T-cell (primary cell): ENCODE measurements at regions of chr10 and their contacts with region 1.

Region 1: DNA sequence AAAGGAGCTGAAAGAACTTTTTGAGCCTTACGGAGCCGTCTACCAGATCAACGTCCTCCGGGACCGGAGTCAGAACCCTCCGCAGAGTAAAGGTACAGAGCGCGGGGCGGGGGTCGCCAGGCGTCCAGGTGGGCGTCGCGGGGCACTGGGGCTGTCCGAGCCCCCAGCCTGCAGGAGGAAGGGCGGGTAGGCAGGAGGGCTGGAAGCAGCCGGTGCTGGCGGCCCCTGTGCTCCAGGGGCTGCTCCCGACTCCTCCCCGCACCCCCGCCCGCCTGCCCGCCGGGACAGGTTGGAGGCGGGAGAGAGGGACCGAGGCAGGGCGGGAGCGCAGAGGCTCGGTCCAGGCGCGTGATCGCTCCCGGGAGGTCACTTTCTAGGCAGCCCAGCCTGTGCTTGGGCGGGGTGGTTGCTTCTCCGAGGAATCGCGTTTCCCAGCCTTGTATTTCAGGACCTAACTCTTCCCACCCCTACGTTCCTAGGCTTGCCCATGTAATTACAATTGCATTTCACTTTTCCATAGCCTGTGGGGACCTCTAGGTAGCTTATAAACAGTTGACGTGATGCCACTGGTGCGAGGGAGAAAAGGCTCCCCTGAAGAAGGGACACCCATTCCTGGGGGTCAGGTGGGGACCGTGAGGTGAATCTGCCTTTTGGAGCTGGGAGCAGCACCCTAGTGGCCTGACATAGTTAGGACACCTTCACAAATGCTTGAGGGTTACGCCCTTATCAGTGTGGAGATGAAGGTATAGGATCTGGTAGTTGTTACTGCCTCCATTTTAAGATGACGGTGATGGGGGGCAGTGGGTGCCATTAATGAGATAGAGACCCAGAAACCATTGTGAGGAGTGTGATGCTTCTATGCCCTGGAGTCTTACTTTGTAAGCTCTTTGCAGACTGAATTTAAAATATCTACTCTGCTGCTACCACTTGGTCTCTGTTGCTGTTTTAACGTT is 148.2 kb downstream of the CELF2 start:
- DNase-seq: peak; percentile 47 to 88 (median 73)
- ATAC-seq: peak; percentile 49 to 64 (median 57)
- H3K4me3 ChIP-seq: peak overlapping the region; percentile 86 to 96
- H3K4me3 Mint-ChIP-seq: no peak overlapping the region
- H3K27ac ChIP-seq: peak overlapping the region; percentile 94
- H3K27ac Mint-ChIP-seq: peak overlapping the region; percentile 97 to 98
- H3K4me1 ChIP-seq: peaks cover 45 to 48% of the 10 kb centered on the region in 2 experiments
- H3K4me1 Mint-ChIP-seq: peaks cover 38 to 44% (median 43%) of the 10 kb centered on the region in 3 donors
- H3K27me3 ChIP-seq: no peaks in the 10 kb centered on the region
- H3K27me3 Mint-ChIP-seq: no peaks in the 10 kb centered on the region

Region 2: DNA sequence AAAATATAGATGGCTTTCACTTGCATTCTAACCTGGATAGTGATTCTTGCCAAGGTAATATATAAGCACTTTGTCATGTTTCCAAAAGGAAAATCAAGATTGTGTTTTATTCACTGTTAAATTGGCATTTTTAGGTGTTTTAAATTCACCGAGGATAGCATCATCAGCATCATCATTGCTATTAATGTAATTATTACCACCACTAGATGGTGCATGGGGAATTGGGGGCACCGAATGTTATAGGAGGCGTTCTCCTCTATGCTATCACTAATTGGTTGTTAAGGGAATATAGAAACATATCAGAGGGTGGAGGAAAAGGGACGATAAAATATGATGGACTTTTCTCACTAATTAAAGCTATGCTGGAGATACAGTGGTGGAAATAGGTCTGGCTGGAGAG is 52.7 kb before region 1 on chr10:
- CTCF ChIA-PET with region 1: interaction called, 21 to 40 read pairs
- POLR2A ChIA-PET with region 1: no interaction called
- DNase-seq: peak in 26 of 35 experiments; percentile 7 to 77 (median 27)
- ATAC-seq: peak; percentile 56 to 96 (median 82)
- H3K4me3 ChIP-seq: no peak overlapping the region
- H3K4me3 Mint-ChIP-seq: peak overlapping the region in 1 of 3 donors; percentile 37
- H3K27ac ChIP-seq: no peak overlapping the region
- H3K27ac Mint-ChIP-seq: peak overlapping the region in 1 of 2 donors; percentile 82
- H3K4me1 ChIP-seq: peaks cover 7 to 8% of the 10 kb centered on the region in 2 experiments
- H3K4me1 Mint-ChIP-seq: peaks cover 24 to 40% (median 28%) of the 10 kb centered on the region in 3 donors
- H3K27me3 ChIP-seq: no peaks in the 10 kb centered on the region
- H3K27me3 Mint-ChIP-seq: no peaks in the 10 kb centered on the region

Region 3: DNA sequence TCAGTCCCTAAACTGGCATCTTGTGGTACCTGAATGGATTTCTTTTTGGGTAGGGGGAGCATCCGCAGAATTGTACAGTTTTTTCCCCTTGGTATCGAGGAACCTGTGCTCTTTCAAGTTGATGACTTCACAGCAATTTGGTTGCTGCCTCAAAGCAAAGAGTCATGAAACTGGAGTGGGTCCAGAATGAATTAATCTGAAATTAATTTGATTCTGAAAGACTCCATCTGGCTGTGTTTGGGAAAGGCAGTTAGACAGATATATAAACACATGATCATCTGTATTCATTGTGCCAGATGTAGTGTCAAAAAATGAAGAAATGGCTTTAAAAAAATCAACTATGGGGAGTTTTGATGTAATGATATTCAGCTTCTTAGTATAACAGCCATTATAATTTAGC is 12.1 kb before region 1 on chr10:
- CTCF ChIA-PET with region 1: interaction called, 4 to 95 read pairs
- POLR2A ChIA-PET with region 1: interaction called, 57 to 417 read pairs
- DNase-seq: no peak
- ATAC-seq: no peak
- H3K4me3 ChIP-seq: no peak overlapping the region
- H3K4me3 Mint-ChIP-seq: peak overlapping the region in 1 of 3 donors; percentile 75
- H3K27ac ChIP-seq: peak overlapping the region; percentile 96
- H3K27ac Mint-ChIP-seq: peak overlapping the region; percentile 96 to 98
- H3K4me1 ChIP-seq: peaks cover 74 to 75% of the 10 kb centered on the region in 2 experiments
- H3K4me1 Mint-ChIP-seq: peaks cover 94 to 99% (median 98%) of the 10 kb centered on the region in 3 donors
- H3K27me3 ChIP-seq: no peaks in the 10 kb centered on the region
- H3K27me3 Mint-ChIP-seq: no peaks in the 10 kb centered on the region

Region 4: GRCh38 chr10:11189582-11190376 is 23.9 kb after region 1 on chr10:
- CTCF ChIA-PET with region 1: interaction called in 1 of 2 experiments, 5 read pairs
- POLR2A ChIA-PET with region 1: interaction called in 1 of 2 experiments, 12 read pairs
- DNase-seq: no peak
- ATAC-seq: no peak
- H3K4me3 ChIP-seq: peak overlapping the region in 1 of 2 donors; percentile 27
- H3K4me3 Mint-ChIP-seq: peak overlapping the region; percentile 4 to 61 (median 40)
- H3K27ac ChIP-seq: peak overlapping the region; percentile 53
- H3K27ac Mint-ChIP-seq: peak overlapping the region; percentile 42 to 77
- H3K4me1 ChIP-seq: peaks cover 28 to 60% of the 10 kb centered on the region in 2 experiments
- H3K4me1 Mint-ChIP-seq: peaks cover 92 to 98% (median 95%) of the 10 kb centered on the region in 3 donors
- H3K27me3 ChIP-seq: no peaks in the 10 kb centered on the region
- H3K27me3 Mint-ChIP-seq: no peaks in the 10 kb centered on the region

Region 5: DNA sequence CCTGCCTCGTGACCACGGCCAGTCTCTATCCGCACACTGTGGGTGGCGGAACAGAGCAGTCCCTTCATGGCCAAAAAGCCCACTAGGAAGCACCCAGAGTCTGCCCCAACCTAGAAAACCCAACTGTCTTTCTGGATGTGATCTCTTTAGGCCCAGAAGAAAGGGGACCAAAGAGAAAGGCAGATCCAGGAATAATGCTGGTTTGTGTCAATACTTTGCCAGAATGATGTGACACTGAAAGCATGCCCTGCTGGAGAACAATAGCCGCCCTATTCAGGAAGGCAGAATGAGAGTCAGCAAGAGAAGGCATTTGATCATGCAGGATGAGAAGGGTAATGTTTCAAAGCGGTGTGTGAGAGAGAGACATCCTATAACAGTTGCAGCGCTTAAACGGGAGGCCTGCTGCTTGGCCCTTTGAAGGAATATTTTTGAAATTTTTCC is 170.9 kb after region 1 on chr10:
- CTCF ChIA-PET with region 1: no interaction called
- POLR2A ChIA-PET with region 1: interaction called in 1 of 2 experiments, 14 read pairs
- DNase-seq: no peak
- ATAC-seq: peak in 1 of 4 experiments; percentile 24
- H3K4me3 ChIP-seq: no peak overlapping the region
- H3K4me3 Mint-ChIP-seq: peak overlapping the region in 1 of 3 donors; percentile 40
- H3K27ac ChIP-seq: no peak overlapping the region
- H3K27ac Mint-ChIP-seq: peak overlapping the region; percentile 60 to 76
- H3K4me1 ChIP-seq: peaks cover 0 to 8% of the 10 kb centered on the region in 2 experiments
- H3K4me1 Mint-ChIP-seq: peaks cover 32 to 55% (median 36%) of the 10 kb centered on the region in 3 donors
- H3K27me3 ChIP-seq: no peaks in the 10 kb centered on the region
- H3K27me3 Mint-ChIP-seq: no peaks in the 10 kb centered on the region

Region 6: GRCh38 chr10:11551916-11552602 is 386.2 kb after region 1 on chr10:
- CTCF ChIA-PET with region 1: no interaction called
- POLR2A ChIA-PET with region 1: no interaction called
- DNase-seq: no peak
- ATAC-seq: peak in 2 of 4 experiments; percentile 53 to 57
- H3K4me3 ChIP-seq: no peak overlapping the region
- H3K4me3 Mint-ChIP-seq: no peak overlapping the region
- H3K27ac ChIP-seq: no peak overlapping the region
- H3K27ac Mint-ChIP-seq: no peak overlapping the region
- H3K4me1 ChIP-seq: no peaks in the 10 kb centered on the region
- H3K4me1 Mint-ChIP-seq: peaks cover 11 to 33% (median 29%) of the 10 kb centered on the region in 3 donors
- H3K27me3 ChIP-seq: no peaks in the 10 kb centered on the region
- H3K27me3 Mint-ChIP-seq: peaks cover 0 to 3% of the 10 kb centered on the region in 2 donors